PC-9 (cell line): ENCODE measurements at regions of chr11 and their contacts with region 1.

Region 1: GRCh38 chr11:15819679-15820286 is 536.6 kb downstream of the SOX6 start:
- DNase-seq: no peak
- H3K4me3 ChIP-seq: no peak overlapping the region
- H3K27ac ChIP-seq: no peak overlapping the region
- H3K4me1 ChIP-seq: peaks cover 31% of the 10 kb centered on the region
- H3K27me3 ChIP-seq: no peaks in the 10 kb centered on the region
- CTCF ChIP-seq: no peak; the same call in 1 of the 2 replicates

Region 2: DNA sequence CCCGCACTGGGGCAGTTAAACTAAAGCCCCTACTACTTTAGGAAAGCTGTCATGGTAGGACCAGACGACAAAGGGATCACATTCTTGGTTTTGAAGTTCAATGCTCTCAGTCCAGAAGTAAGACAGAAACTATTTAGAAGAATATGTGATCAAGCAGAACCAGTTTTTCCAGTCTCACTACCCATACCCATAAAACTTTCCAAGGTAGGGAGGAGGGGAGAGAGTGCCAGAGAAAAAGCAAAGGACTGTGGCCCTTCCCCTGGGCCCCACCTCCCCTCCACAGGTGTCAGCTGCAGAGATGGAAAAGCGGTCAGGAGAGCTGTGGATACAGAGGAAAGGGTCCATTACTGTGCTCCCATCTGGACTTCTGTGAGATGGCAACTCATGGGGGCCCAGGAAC is 50.6 kb before region 1 on chr11:
- CTCF ChIA-PET with region 1: no interaction called
- POLR2A ChIA-PET with region 1: no interaction called
- intact Hi-C with region 1: loop called (anchors 2 kb)
- DNase-seq: peak; percentile 44 to 77
- H3K4me3 ChIP-seq: no peak overlapping the region
- H3K27ac ChIP-seq: peak overlapping the region; percentile 76
- H3K4me1 ChIP-seq: peaks cover 39% of the 10 kb centered on the region
- H3K27me3 ChIP-seq: no peaks in the 10 kb centered on the region
- CTCF ChIP-seq: no peak

Region 3: DNA sequence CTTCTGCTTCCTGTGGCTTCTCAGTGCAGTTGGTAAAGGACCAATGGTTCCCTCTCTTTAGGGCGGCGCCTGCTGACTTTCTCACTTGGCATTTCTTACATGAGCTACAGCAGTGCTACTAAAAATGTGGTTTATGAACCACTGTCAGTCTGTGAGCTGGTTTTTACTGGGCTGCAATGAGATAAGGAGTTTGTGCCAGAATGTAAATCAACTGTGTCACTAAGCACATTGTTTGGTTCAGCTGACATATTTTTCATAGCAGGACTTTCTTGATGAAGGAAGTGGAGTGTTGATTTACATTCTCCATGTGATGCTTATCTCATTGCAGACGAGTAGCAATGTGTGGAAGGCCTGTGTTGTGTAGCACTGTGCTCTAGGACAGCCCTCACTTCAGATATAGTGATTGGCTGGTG is 73.3 kb after region 1 on chr11:
- CTCF ChIA-PET with region 1: no interaction called
- POLR2A ChIA-PET with region 1: no interaction called
- intact Hi-C with region 1: loop called (anchors 2 kb)
- DNase-seq: peak; percentile 58 to 87
- H3K4me3 ChIP-seq: no peak overlapping the region
- H3K27ac ChIP-seq: peak overlapping the region; percentile 44
- H3K4me1 ChIP-seq: peaks cover 29% of the 10 kb centered on the region
- H3K27me3 ChIP-seq: no peaks in the 10 kb centered on the region
- CTCF ChIP-seq: no peak

Region 4: DNA sequence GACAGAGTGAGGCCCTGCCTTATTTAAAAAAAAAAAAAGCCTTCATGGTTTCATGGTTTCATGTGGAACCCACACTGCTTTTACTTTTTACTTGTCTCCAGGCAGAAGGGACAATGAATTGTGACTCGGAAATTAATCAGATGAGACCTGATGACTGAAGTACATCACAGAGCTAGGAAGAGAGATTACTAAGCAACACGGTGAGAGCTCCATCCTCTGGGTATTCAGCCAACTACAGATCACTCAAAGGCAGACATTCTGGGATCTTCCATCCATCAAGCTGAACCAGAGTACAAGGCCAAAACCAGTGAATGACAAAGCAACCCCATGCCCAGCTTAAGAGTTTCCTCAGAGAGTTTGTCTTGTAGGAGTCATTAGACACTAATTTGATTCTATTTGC is 103.4 kb after region 1 on chr11:
- CTCF ChIA-PET with region 1: no interaction called
- POLR2A ChIA-PET with region 1: no interaction called
- intact Hi-C with region 1: no loop called
- DNase-seq: no peak
- H3K4me3 ChIP-seq: no peak overlapping the region
- H3K27ac ChIP-seq: no peak overlapping the region
- H3K4me1 ChIP-seq: no peaks in the 10 kb centered on the region
- H3K27me3 ChIP-seq: no peaks in the 10 kb centered on the region
- CTCF ChIP-seq: no peak

Region 5: DNA sequence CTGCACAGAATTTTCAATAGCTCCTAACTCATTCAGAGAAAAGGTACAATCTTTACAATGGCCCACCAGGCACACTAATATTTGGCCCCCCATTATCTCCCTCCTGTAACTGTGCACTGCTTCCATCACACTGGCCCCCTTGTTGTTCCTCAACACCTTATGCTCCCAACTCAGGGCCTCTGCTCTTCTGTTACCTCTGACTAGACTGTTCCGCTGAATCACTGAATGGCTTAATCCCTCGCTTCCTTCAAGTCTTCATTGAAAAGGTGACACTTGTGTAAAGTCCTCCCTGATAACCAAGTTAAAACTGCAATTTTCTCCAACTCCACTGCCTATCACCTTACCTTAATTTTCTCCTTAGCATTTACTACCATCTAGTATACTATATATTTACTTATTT is 1366.2 kb after region 1 on chr11:
- CTCF ChIA-PET with region 1: no interaction called
- POLR2A ChIA-PET with region 1: interaction called, 22 read pairs
- intact Hi-C with region 1: no loop called
- DNase-seq: no peak
- H3K4me3 ChIP-seq: no peak overlapping the region
- H3K27ac ChIP-seq: no peak overlapping the region
- H3K4me1 ChIP-seq: no peaks in the 10 kb centered on the region
- H3K27me3 ChIP-seq: no peaks in the 10 kb centered on the region
- CTCF ChIP-seq: no peak